Heart right ventricle (tissue), 16 donors: ENCODE measurements at regions of chr5 and their contacts with region 1.

Region 1: GRCh38 chr5:54249210-54250028 is 61.0 kb downstream of the ARL15 start:
- DNase-seq: peak; percentile 24 to 29
- ATAC-seq: peak in 3 of 8 donors; percentile 15 to 41 (median 25)
- H3K4me3 ChIP-seq: no peak overlapping the region
- H3K27ac ChIP-seq: peak overlapping the region in 1 of 10 donors; percentile 70
- H3K4me1 ChIP-seq: peaks cover 0 to 89% (median 30%) of the 10 kb centered on the region in 9 donors
- H3K27me3 ChIP-seq: no peaks in the 10 kb centered on the region
- CTCF ChIP-seq: no peak

Region 2: GRCh38 chr5:54206580-54207229 is 42.7 kb before region 1 on chr5:
- intact Hi-C with region 1: no loop called
- DNase-seq: no peak
- ATAC-seq: no peak
- H3K4me3 ChIP-seq: no peak overlapping the region
- H3K27ac ChIP-seq: no peak overlapping the region
- H3K4me1 ChIP-seq: peaks cover 0 to 37% (median 13%) of the 10 kb centered on the region in 9 donors
- H3K27me3 ChIP-seq: no peaks in the 10 kb centered on the region
- CTCF ChIP-seq: no peak

Region 3: DNA sequence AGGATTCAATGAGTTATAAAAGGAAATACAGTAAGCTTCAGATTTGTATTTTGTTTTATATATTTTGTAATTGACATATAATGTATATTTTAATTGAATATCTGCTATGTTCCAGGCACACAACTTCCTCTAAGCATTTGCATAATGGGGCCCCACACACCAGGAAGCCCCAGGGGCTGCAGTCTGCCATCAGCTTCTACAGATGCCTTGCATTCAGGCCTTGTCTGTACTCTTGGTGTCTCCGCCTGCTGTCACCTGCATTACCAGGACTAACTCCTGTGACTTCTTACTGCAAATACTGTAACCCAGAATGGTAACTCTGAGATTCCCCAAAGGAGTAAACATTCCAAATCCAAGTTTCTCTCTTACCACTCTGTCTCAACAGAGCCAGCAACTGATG is 40.4 kb after region 1 on chr5:
- intact Hi-C with region 1: loop called in 1 of 10 experiments (anchors 2 kb)
- DNase-seq: no peak
- ATAC-seq: no peak
- H3K4me3 ChIP-seq: no peak overlapping the region
- H3K27ac ChIP-seq: no peak overlapping the region
- H3K4me1 ChIP-seq: peaks cover 0 to 58% (median 12%) of the 10 kb centered on the region in 9 donors
- H3K27me3 ChIP-seq: no peaks in the 10 kb centered on the region
- CTCF ChIP-seq: no peak